ENCODE measurements at regions of chr7 and their contacts with region 1.

Region 1: GRCh38 chr7:29274146-29275017 is 79.8 kb downstream of the CHN2 start:
- DNase-seq: no peak
- H3K4me3 Mint-ChIP-seq: no peak overlapping the region
- H3K27ac Mint-ChIP-seq: no peak overlapping the region
- H3K4me1 Mint-ChIP-seq: peaks cover 52% of the 10 kb centered on the region
- H3K27me3 Mint-ChIP-seq: peaks cover 26% of the 10 kb centered on the region

Region 2: GRCh38 chr7:29177963-29178600 is 96.3 kb before region 1 on chr7:
- intact Hi-C with region 1: loop called (anchors 10 kb)
- DNase-seq: no peak
- H3K4me3 Mint-ChIP-seq: no peak overlapping the region
- H3K27ac Mint-ChIP-seq: peak overlapping the region; percentile 3
- H3K4me1 Mint-ChIP-seq: peaks cover 10% of the 10 kb centered on the region
- H3K27me3 Mint-ChIP-seq: peaks cover 16% of the 10 kb centered on the region

Region 3: GRCh38 chr7:29285444-29285793 is 11.0 kb after region 1 on chr7:
- intact Hi-C with region 1: loop called (anchors 1 kb)
- DNase-seq: peak; percentile 54
- H3K4me3 Mint-ChIP-seq: no peak overlapping the region
- H3K27ac Mint-ChIP-seq: no peak overlapping the region
- H3K4me1 Mint-ChIP-seq: peaks cover 47% of the 10 kb centered on the region
- H3K27me3 Mint-ChIP-seq: peaks cover 33% of the 10 kb centered on the region